ENCODE measurements at regions of chr16 and their contacts with region 1.

Region 1: GRCh38 chr16:84699712-84700445 is at the start of gene USP10:
- DNase-seq: peak; percentile 92
- ATAC-seq: peak; percentile 77
- H3K4me3 Mint-ChIP-seq: peak within 1 kb of the TSS; percentile 94
- H3K27ac Mint-ChIP-seq: peak within 1 kb of the TSS; percentile 92
- H3K4me1 Mint-ChIP-seq: peaks cover 48% of the 10 kb centered on the region
- H3K27me3 Mint-ChIP-seq: no peaks in the 10 kb centered on the region
- CTCF ChIP-seq: no peak
- total RNA-seq, gene USP10: 138 and 147 TPM in 2 replicates

Region 2: DNA sequence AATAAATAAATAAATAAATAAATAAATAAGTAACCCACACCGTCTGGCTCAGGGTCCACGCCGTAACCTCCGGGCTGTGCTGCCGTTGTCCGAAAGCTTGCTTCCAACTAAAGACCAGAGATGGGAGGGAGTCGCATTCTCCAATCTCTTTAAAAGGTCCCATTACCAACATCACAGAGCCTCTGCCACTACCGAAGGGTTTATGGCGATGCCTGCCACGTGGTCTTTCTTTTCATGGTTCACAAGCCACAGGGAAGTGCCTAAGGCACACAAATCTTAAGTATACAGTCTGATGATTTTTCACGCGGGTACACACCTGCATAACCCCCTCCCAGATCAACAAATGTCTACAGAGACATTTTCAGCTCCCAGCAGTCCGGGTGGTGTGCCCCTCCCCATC is 83.4 kb before region 1 on chr16:
- CTCF ChIA-PET with region 1: no interaction called
- POLR2A ChIA-PET with region 1: no interaction called
- intact Hi-C with region 1: no loop called
- DNase-seq: no peak
- ATAC-seq: peak; percentile 15
- H3K4me3 Mint-ChIP-seq: peak overlapping the region; percentile 94
- H3K27ac Mint-ChIP-seq: peak overlapping the region; percentile 84
- H3K4me1 Mint-ChIP-seq: peaks cover 78% of the 10 kb centered on the region
- H3K27me3 Mint-ChIP-seq: no peaks in the 10 kb centered on the region
- CTCF ChIP-seq: no peak

Region 3: GRCh38 chr16:84647828-84648594 is 51.9 kb before region 1 on chr16 and contains the start of gene KLHL36:
- CTCF ChIA-PET with region 1: no interaction called
- POLR2A ChIA-PET with region 1: interaction called, 9 read pairs
- intact Hi-C with region 1: loop called (anchors 2 kb)
- DNase-seq: peak; percentile 87
- ATAC-seq: peak; percentile 91
- H3K4me3 Mint-ChIP-seq: peak within 1 kb of the TSS; percentile 87
- H3K27ac Mint-ChIP-seq: peak within 1 kb of the TSS; percentile 90
- H3K4me1 Mint-ChIP-seq: peaks cover 50% of the 10 kb centered on the region
- H3K27me3 Mint-ChIP-seq: no peaks in the 10 kb centered on the region
- CTCF ChIP-seq: no peak
- total RNA-seq, gene KLHL36: 62.6 and 72.7 TPM in 2 replicates

Region 4: GRCh38 chr16:84687715-84688114 is 12.2 kb before region 1 on chr16:
- CTCF ChIA-PET with region 1: no interaction called
- POLR2A ChIA-PET with region 1: interaction called, 14 read pairs
- intact Hi-C with region 1: loop called (anchors 1 kb)
- DNase-seq: no peak
- ATAC-seq: peak; percentile 98
- H3K4me3 Mint-ChIP-seq: peak overlapping the region; percentile 13
- H3K27ac Mint-ChIP-seq: peak overlapping the region; percentile 54
- H3K4me1 Mint-ChIP-seq: peaks cover 22% of the 10 kb centered on the region
- H3K27me3 Mint-ChIP-seq: peaks cover 6% of the 10 kb centered on the region
- CTCF ChIP-seq: no peak